ENCODE measurements at regions of chr6 and their contacts with region 1.

Region 1: DNA sequence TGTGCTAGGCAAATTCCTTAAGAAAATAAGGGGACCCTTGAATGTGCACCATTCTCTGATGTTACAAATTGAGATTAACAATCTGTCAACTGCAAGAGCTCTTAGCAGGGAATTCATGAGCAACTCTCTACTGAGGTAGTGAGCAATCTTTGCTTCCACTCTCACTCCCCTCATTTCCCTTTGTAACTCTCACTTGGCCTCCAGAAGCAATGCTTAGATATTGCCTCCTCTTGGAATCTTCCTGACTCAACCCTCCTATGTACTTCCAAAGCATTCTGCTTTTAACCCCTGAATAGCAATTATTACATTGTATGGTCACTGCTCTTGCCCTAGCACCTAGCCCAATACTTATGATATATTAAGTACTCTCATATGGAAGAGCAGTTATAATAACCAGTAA is 16.5 kb downstream of the XPO5 start:
- DNase-seq: no peak
- H3K4me3 ChIP-seq: no peak overlapping the region
- H3K27ac ChIP-seq: no peak overlapping the region
- H3K27me3 ChIP-seq: no peaks in the 10 kb centered on the region
- CTCF ChIP-seq: no peak

Region 2: GRCh38 chr6:43570876-43571441 is 11.6 kb after region 1 on chr6:
- CTCF ChIA-PET with region 1: interaction called, 10 read pairs
- POLR2A ChIA-PET with region 1: interaction called, 4 read pairs
- DNase-seq: no peak
- H3K4me3 ChIP-seq: no peak overlapping the region
- H3K27ac ChIP-seq: no peak overlapping the region
- H3K27me3 ChIP-seq: no peaks in the 10 kb centered on the region
- CTCF ChIP-seq: no peak

Measured in AG04450 (cell line).